Right ventricle myocardium superior (tissue), 1 donor: ENCODE measurements at regions of chr10 and their contacts with region 1.

Region 1: GRCh38 chr10:86585037-86585725 is 63.6 kb upstream of the WAPL start:
- DNase-seq: peak; percentile 74
- ATAC-seq: peak; percentile 96

Region 2: DNA sequence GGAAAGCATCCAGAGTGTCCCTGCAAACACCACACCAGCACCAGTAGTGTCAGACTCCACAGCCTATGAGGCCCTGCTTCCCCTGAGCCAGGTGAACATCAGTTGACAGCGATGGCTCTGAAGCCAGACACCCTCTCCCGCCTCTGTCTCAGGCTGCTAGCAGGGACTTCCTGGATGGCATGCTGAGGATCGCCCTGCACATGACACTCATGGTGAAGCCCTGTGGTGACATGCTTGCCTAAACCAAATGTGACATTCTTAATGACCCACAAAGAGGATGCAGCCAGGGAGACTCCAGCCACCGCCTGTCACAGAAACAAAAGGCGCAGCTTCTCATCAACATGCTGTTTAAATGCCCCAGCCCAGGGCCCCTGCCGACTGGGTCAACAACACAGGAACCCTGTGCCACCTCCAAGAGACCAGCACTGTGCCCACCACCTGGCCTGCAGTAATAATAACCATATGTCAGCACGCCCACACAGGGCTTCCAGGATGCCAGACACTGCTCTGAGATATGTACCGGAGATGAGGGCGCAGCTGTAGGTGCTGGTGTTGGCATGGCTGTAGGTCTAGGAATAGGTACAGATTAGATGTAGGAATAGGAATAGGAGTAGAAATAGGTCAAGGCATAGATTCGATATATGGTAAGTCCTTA is 299.9 kb before region 1 on chr10:
- intact Hi-C with region 1: no loop called
- DNase-seq: no peak
- ATAC-seq: no peak

Region 3: DNA sequence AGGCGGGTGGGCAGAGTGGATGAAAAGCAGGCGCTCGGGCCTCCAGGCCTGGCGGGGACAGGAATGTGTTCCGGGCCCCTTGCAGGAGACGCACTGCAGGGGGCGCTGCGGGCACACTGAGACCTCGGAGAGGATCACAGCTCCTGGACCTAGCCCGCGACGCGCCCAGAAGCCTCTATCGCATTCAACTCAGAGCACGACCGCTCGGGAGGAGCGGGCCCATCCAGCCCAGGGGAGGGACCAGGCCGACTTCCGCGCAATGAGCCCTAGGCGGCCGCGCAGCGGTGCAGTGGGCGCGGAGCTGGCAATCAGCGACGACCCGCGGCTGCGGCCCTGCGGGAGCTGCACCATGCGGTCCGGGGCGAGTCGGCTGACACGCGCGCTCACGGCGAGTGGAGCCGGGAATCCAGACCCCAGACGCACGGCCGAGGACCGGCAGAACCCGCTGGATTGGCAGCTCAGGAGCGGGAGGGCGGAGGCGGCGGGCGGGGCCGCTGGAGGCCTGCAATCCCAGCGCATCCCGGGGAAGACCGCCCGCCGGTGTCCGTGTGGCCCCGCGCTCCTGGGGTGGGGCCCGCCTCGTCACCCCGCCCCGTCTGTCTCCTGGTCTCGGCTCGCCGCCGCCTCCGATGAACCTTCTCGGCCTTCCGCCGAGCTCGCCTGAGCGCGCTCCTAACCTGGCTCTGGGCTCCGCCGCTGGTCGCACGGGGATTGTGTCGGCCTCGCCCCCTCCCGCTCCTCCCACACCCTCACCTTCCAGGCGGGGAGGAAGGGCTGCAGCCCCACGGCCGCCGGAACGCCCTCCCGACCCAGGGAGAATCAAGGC is 185.1 kb before region 1 on chr10:
- intact Hi-C with region 1: loop called (anchors 5 kb)
- DNase-seq: peak; percentile 96
- ATAC-seq: peak; percentile 95

Region 4: DNA sequence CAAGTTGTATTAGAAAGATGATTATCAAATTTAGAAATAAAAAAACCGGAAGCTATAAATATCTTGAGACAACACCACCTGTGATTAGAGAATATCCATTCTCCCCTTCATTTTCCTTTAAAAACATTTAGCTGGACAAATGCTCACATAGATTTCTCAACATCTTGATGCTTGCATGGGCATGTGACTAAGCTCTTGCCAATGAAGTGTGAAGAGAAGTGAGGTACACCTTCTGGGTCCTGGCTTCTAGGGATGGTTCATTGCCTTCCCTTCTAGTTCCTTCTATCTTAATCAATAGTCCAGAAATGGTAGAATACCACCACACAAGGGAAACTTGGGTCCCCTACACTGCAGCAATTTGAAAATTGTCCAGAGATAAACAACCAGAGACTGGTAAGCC is 104.6 kb before region 1 on chr10:
- intact Hi-C with region 1: no loop called
- DNase-seq: no peak
- ATAC-seq: no peak

Region 5: GRCh38 chr10:86521678-86522509 is 63.3 kb before region 1 on chr10 and contains the start of gene WAPL:
- intact Hi-C with region 1: loop called (anchors 10 kb)
- DNase-seq: peak; percentile 97
- ATAC-seq: peak; percentile 99
- total RNA-seq, gene WAPL: 19.7 TPM